HCT116 (cell line): ENCODE measurements at regions of chr1 and their contacts with region 1.

Region 1: DNA sequence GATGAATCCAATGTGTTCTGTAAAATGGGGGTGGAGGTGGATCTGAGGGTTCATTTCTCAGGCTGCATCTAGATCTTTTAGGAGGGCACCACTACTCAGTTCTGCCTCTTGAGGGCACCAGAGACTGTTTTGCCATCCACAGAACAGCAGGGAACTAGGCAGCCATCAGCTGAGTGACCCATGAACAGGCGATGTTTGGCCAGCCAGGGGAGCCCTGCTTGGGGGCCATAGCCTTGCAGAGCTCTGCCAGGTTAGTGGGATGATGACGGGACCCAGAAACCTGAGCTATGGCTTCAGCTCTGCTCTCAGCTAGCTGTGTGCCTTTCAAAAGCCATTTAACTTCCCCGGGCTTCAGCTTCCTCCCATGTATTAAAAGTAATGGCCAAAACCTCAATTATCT is 13.4 kb upstream of the NOS1AP start:
- DNase-seq: peak; percentile 74
- ATAC-seq: peak; percentile 91
- H3K4me3 ChIP-seq: no peak overlapping the region
- H3K27ac ChIP-seq: no peak overlapping the region
- H3K4me1 ChIP-seq: peaks cover 6 to 19% of the 10 kb centered on the region in 2 experiments
- H3K27me3 ChIP-seq: no peaks in the 10 kb centered on the region
- CTCF ChIP-seq: peak; percentile 93 to 97 (median 94)
- POLR2A ChIP-seq: no peak
- RAD21 ChIP-seq: peak; percentile 98

Region 2: DNA sequence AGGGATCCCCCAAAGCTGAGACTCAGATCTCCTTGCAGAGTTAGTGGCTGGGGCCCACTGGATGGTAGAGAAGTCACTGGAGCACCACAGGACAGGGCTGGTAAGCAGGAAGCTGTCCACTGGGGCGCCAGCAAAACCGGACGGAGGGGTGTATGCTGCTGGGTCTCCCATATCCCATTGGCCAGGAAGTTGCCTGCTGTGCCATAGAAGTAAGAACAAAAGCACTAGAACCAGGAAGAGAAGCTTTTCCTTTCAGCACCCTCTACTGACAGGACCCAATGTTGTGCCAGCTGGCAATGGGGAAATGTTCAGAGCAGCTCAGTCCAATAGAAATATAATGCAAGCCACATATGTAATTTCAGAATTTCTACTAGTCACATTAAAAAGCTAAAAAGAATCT is 174.1 kb after region 1 on chr1:
- CTCF ChIA-PET with region 1: interaction called, 15 read pairs
- POLR2A ChIA-PET with region 1: no interaction called
- RAD21 ChIA-PET with region 1: interaction called in 1 of 2 experiments, 6 read pairs
- intact Hi-C with region 1: loop called (anchors 5 kb)
- DNase-seq: peak; percentile 24
- ATAC-seq: peak; percentile 92
- H3K4me3 ChIP-seq: no peak overlapping the region
- H3K27ac ChIP-seq: no peak overlapping the region
- H3K4me1 ChIP-seq: peaks cover 8 to 9% of the 10 kb centered on the region in 2 experiments; a peak in 3 of 4 replicates
- H3K27me3 ChIP-seq: no peaks in the 10 kb centered on the region
- CTCF ChIP-seq: peak; percentile 22 to 61 (median 37); a peak in 4 of 6 replicates
- POLR2A ChIP-seq: no peak
- RAD21 ChIP-seq: peak; percentile 76

Region 3: GRCh38 chr1:162276493-162276892 is 220.4 kb after region 1 on chr1:
- CTCF ChIA-PET with region 1: interaction called, 15 read pairs
- POLR2A ChIA-PET with region 1: no interaction called
- RAD21 ChIA-PET with region 1: interaction called, 4 to 5 read pairs
- intact Hi-C with region 1: loop called (anchors 1 kb)
- DNase-seq: peak; percentile 26
- ATAC-seq: peak; percentile 79
- H3K4me3 ChIP-seq: no peak overlapping the region
- H3K27ac ChIP-seq: no peak overlapping the region
- H3K4me1 ChIP-seq: no peaks in the 10 kb centered on the region
- H3K27me3 ChIP-seq: no peaks in the 10 kb centered on the region
- CTCF ChIP-seq: peak; percentile 30 to 82 (median 61)
- POLR2A ChIP-seq: no peak
- RAD21 ChIP-seq: peak; percentile 92

Region 4: GRCh38 chr1:162357681-162358266 is 301.7 kb after region 1 on chr1:
- CTCF ChIA-PET with region 1: interaction called, 6 read pairs
- POLR2A ChIA-PET with region 1: no interaction called
- RAD21 ChIA-PET with region 1: interaction called in 1 of 2 experiments, 3 read pairs
- intact Hi-C with region 1: loop called (anchors 5 kb)
- DNase-seq: peak; percentile 18
- ATAC-seq: peak; percentile 90
- H3K4me3 ChIP-seq: no peak overlapping the region
- H3K27ac ChIP-seq: no peak overlapping the region
- H3K4me1 ChIP-seq: no peaks in the 10 kb centered on the region
- H3K27me3 ChIP-seq: no peaks in the 10 kb centered on the region
- CTCF ChIP-seq: peak; percentile 70 to 79 (median 73); a peak in 5 of 6 replicates
- POLR2A ChIP-seq: no peak
- RAD21 ChIP-seq: peak; percentile 88

Region 5: GRCh38 chr1:162391790-162392563 is 335.9 kb after region 1 on chr1:
- CTCF ChIA-PET with region 1: interaction called, 8 read pairs
- POLR2A ChIA-PET with region 1: no interaction called
- RAD21 ChIA-PET with region 1: no interaction called
- intact Hi-C with region 1: loop called (anchors 2 kb)
- DNase-seq: peak; percentile 42
- ATAC-seq: peak; percentile 73
- H3K4me3 ChIP-seq: no peak overlapping the region
- H3K27ac ChIP-seq: no peak overlapping the region
- H3K4me1 ChIP-seq: peaks cover 0 to 4% of the 10 kb centered on the region in 2 experiments; a peak in 2 of 4 replicates
- H3K27me3 ChIP-seq: no peaks in the 10 kb centered on the region
- CTCF ChIP-seq: peak; percentile 76 to 86 (median 82)
- POLR2A ChIP-seq: no peak
- RAD21 ChIP-seq: peak; percentile 93

Region 6: GRCh38 chr1:162502928-162503327 is 446.9 kb after region 1 on chr1:
- CTCF ChIA-PET with region 1: no interaction called
- POLR2A ChIA-PET with region 1: no interaction called
- RAD21 ChIA-PET with region 1: no interaction called
- intact Hi-C with region 1: loop called (anchors 5 kb)
- DNase-seq: no peak
- ATAC-seq: no peak
- H3K4me3 ChIP-seq: no peak overlapping the region
- H3K27ac ChIP-seq: no peak overlapping the region
- H3K4me1 ChIP-seq: peaks cover 5 to 9% of the 10 kb centered on the region in 2 experiments
- H3K27me3 ChIP-seq: no peaks in the 10 kb centered on the region
- CTCF ChIP-seq: no peak
- POLR2A ChIP-seq: no peak
- RAD21 ChIP-seq: no peak

Region 7: GRCh38 chr1:162612606-162613400 is 556.8 kb after region 1 on chr1:
- CTCF ChIA-PET with region 1: no interaction called
- POLR2A ChIA-PET with region 1: no interaction called
- RAD21 ChIA-PET with region 1: no interaction called
- intact Hi-C with region 1: loop called (anchors 5 kb)
- DNase-seq: no peak
- ATAC-seq: 0 out of 2 replicates have a peak, but pooled peaks have one; percentile 9
- H3K4me3 ChIP-seq: no peak overlapping the region
- H3K27ac ChIP-seq: no peak overlapping the region
- H3K4me1 ChIP-seq: no peaks in the 10 kb centered on the region
- H3K27me3 ChIP-seq: no peaks in the 10 kb centered on the region
- CTCF ChIP-seq: no peak
- POLR2A ChIP-seq: no peak
- RAD21 ChIP-seq: no peak